Esophagus muscularis mucosa (tissue), 4 donors: ENCODE measurements at regions of chr11 and their contacts with region 1.

Region 1: DNA sequence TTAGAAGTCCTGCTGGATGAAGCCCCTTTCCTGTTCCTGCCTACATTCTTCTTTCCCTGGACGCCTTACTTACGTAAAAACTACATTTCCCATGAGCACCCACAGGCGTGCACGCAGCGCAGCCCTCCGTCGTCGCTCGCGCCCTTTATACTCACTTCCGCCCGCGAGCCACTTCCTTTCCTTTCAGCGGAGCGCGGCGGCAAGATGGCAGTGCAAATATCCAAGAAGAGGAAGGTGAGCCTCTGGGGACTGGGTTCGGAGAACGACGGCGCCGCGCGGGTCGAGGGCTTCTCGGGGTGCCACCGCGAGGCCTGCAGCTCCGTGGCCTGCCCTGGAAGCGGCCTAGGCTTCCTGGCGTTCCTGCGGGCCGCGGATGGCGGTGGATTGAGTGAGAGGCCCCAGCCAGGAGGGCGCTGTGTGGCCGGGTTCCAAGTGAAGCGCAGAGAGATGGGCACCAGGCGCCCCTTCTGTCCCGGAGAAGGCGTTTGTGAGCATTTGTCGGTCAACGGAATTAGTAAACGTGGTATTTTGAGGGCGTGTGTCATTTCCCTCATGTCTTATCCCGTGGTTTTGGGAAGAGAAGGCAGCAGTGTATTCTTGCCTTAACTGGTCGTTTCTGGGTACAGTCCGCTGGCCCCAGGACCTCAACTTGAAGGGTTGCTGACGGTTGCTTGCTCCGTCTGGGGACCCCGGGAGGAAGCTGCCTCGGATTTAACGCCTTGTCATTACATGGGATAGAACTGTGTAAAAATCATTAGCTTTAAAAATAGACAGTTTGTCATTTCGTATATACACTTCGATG is at the start of gene RPS3:
- DNase-seq: peak; percentile 98
- H3K4me3 ChIP-seq: peak within 1 kb of the TSS; percentile 66 to 73 (median 72)
- H3K27ac ChIP-seq: peak within 1 kb of the TSS; percentile 89 to 94 (median 90)
- H3K4me1 ChIP-seq: peaks cover 13 to 44% (median 28%) of the 10 kb centered on the region in 4 donors
- H3K27me3 ChIP-seq: no peaks in the 10 kb centered on the region
- CTCF ChIP-seq: peak in 1 of 3 experiments; percentile 27
- EP300 ChIP-seq: no peak
- POLR2A ChIP-seq: peak; percentile 84
- total RNA-seq, gene RPS3: 879 to 1,878 (median 1,387) TPM

Region 2: GRCh38 chr11:75525596-75526541 is 126.3 kb after region 1 on chr11 and contains the start of gene GDPD5:
- intact Hi-C with region 1: loop called (anchors 5 kb)
- DNase-seq: peak; percentile 93
- H3K4me3 ChIP-seq: peak within 1 kb of the TSS; percentile 66 to 97 (median 74)
- H3K27ac ChIP-seq: peak within 1 kb of the TSS in 3 of 4 donors; percentile 26 to 52 (median 46)
- H3K4me1 ChIP-seq: peaks cover 13 to 34% (median 28%) of the 10 kb centered on the region in 4 donors
- H3K27me3 ChIP-seq: no peaks in the 10 kb centered on the region
- CTCF ChIP-seq: peak; percentile 53 to 61 (median 54)
- EP300 ChIP-seq: no peak
- POLR2A ChIP-seq: no peak
- total RNA-seq, gene GDPD5: 5.1 to 9.3 (median 8.4) TPM

Region 3: GRCh38 chr11:76215941-76216340 is 816.4 kb after region 1 on chr11:
- intact Hi-C with region 1: no loop called
- DNase-seq: no peak
- H3K4me3 ChIP-seq: no peak overlapping the region
- H3K27ac ChIP-seq: no peak overlapping the region
- H3K4me1 ChIP-seq: peaks cover under 1 to 7% (median 3%) of the 10 kb centered on the region in 4 donors
- H3K27me3 ChIP-seq: peaks cover 0 to 5% (median 0%) of the 10 kb centered on the region in 4 donors
- CTCF ChIP-seq: no peak
- EP300 ChIP-seq: no peak
- POLR2A ChIP-seq: no peak